Ascending aorta (tissue), 2 donors: ENCODE measurements at regions of chr17 and their contacts with region 1.

Region 1: GRCh38 chr17:59440784-59441441 is 109.5 kb downstream of the YPEL2 start:
- DNase-seq: peak; percentile 68 to 98
- H3K4me3 ChIP-seq: peak overlapping the region in 1 of 2 donors; percentile 22
- H3K27ac ChIP-seq: peak overlapping the region; percentile 91 to 93
- H3K4me1 ChIP-seq: peaks cover 8 to 35% of the 10 kb centered on the region in 2 donors
- H3K27me3 ChIP-seq: no peaks in the 10 kb centered on the region
- CTCF ChIP-seq: peak; percentile 71 to 93 (median 74)

Region 2: DNA sequence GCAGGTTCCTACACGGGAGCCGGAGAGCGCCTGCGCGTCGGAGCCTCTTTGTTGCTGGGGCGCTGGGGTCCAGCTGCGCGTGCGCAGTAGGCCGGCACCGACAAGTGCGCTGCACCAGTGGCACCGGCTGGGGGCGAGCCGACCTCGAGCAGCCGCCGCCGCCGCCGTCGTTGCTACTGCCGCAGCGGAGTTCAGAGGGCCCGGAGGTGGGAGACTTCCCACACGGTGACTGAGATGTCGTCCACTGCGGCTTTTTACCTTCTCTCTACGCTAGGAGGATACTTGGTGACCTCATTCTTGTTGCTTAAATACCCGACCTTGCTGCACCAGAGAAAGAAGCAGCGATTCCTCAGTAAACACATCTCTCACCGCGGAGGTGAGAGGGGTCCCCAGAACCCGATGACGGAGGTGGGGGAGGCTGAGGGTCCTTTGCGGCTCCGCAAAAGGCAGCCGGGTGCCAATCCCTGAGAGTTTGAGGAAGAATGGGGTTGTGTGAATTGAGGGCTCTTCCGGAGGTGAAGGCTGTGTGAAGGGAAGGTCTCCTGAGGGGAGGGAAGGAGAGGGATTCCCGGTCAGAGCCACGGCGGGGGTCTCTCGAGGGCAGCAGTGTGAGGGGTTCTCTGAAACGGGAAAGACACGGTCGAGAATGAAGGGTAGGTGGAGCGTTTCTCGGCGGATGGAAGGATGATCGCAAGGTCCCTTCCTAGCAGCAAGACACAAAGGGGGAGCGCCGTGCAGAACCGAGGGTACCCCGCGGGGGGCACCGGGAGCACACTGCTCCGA is 220.3 kb before region 1 on chr17 and contains the start of gene GDPD1:
- intact Hi-C with region 1: loop called (anchors 10 kb)
- DNase-seq: peak; percentile 63 to 97
- H3K4me3 ChIP-seq: peak within 1 kb of the TSS; percentile 78 to 84
- H3K27ac ChIP-seq: peak within 1 kb of the TSS; percentile 6 to 37
- H3K4me1 ChIP-seq: no peaks in the 10 kb centered on the region
- H3K27me3 ChIP-seq: no peaks in the 10 kb centered on the region
- CTCF ChIP-seq: peak; percentile 76 to 90 (median 82)
- total RNA-seq, gene GDPD1: not detected

Region 3: DNA sequence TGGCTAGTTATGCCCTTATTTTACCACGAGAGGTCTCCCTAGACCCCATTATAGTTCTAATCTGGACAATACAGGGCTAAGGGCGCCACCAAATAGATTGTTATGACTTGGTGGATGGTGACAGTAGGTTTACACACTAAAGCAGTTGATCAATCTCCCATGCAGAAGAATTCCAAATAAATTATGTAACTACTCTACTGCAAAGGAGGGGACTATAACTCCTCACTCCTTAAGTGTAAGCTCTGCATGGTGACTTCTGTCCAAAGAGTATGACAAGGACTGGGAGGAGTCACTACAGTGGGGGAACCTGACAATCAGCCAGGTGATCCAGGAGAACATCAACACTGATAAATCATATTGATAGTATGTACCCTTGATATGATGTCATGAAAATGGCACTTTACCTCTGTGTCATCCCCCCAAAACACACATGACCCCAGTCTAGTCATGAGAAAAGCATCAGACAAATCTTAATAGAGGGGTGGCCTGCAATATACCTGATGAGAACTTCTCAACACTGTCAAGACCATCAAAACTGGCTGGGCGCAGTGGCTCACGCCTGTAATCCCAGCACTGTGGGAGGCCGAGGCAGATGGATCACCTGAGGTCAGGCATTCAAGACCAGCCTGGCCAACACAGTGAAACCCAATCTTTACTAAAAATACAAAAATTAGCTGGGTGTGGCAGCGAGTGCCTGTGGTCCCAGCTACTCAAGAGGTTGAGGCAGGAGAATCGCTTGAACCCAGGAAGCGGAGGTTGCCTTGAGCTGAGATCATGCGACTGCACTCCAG is 129.6 kb before region 1 on chr17:
- intact Hi-C with region 1: loop called (anchors 1 kb)
- DNase-seq: peak in 1 of 2 donors; percentile 69
- H3K4me3 ChIP-seq: no peak overlapping the region
- H3K27ac ChIP-seq: peak overlapping the region; percentile 3 to 10
- H3K4me1 ChIP-seq: peaks cover 0 to 6% of the 10 kb centered on the region in 2 donors
- H3K27me3 ChIP-seq: no peaks in the 10 kb centered on the region
- CTCF ChIP-seq: peak; percentile 77 to 89 (median 80)

Region 4: GRCh38 chr17:59387351-59388068 is 53.4 kb before region 1 on chr17:
- intact Hi-C with region 1: loop called (anchors 2 kb)
- DNase-seq: no peak
- H3K4me3 ChIP-seq: no peak overlapping the region
- H3K27ac ChIP-seq: peak overlapping the region; percentile 66 to 74
- H3K4me1 ChIP-seq: peaks cover 5 to 40% of the 10 kb centered on the region in 2 donors
- H3K27me3 ChIP-seq: no peaks in the 10 kb centered on the region
- CTCF ChIP-seq: peak in 1 of 3 experiments; percentile 13

Region 5: DNA sequence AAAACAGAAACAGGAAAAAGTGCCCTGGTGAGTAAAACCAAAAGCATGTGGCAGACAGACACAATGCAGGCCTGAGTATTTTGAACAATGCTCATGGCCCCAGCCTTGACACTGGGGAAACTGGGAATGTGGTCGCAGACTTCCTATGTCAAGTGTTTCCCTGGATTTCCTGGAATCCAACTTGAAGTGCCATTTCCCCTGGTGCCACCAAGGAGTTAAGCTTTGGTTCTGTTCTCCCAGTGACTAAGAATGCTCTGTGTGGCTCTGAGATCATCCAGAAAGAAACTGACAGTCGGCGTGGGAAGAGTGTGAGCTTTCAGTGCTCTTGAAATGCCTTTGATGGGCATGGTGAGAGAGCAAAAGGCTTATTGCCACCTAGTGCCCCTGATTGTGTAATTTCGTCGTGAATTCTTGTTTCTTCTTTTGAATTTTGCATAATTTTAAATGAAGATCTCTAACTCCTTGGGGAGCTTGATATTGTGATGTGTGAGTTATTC is 13.4 kb before region 1 on chr17:
- intact Hi-C with region 1: loop called (anchors 2 kb)
- DNase-seq: peak in 1 of 2 donors; percentile 80
- H3K4me3 ChIP-seq: no peak overlapping the region
- H3K27ac ChIP-seq: peak overlapping the region; percentile 94
- H3K4me1 ChIP-seq: peaks cover 35 to 66% of the 10 kb centered on the region in 2 donors
- H3K27me3 ChIP-seq: no peaks in the 10 kb centered on the region
- CTCF ChIP-seq: no peak

Region 6: DNA sequence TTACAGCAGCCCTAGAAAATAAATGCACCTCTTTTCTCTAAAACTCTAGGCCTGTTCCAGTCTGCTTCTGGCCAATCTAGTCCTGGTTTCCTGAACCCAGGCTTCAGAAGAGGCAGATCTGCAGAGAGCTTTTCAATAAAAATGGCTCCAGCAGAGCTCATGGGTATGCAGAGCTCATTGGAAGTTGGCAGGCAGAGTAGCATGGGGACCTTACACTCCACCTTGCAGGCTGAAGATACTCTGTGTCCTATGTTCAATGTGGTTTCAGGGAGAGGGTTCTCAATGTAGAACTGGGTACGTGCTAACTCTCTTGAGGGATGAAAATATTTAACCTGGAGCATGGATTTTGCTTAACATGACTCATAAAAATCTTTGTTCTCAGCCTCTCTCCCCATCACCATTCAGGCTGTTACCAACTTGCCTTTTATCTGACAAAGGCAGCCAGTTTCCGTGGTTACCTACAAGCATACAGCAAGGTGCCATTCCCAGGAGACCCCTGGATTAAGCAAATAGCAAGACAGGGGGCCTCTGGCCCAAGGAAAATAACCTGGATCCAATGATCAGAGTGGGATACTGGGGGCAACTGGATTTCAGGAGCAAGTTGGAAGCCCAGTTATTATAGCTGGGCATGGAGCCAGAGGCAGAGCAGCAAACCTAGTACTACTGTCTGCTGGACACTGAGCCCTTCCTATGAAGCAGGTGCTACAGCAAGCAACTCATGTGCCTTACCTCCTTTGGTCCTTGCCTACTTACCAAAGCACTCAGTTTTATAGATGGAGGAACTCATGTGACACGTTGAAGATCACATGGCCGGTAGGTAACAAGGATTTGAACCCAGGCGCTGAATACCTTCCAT is 26.3 kb after region 1 on chr17:
- intact Hi-C with region 1: no loop called
- DNase-seq: no peak
- H3K4me3 ChIP-seq: no peak overlapping the region
- H3K27ac ChIP-seq: no peak overlapping the region
- H3K4me1 ChIP-seq: no peaks in the 10 kb centered on the region
- H3K27me3 ChIP-seq: no peaks in the 10 kb centered on the region
- CTCF ChIP-seq: no peak

Region 7: DNA sequence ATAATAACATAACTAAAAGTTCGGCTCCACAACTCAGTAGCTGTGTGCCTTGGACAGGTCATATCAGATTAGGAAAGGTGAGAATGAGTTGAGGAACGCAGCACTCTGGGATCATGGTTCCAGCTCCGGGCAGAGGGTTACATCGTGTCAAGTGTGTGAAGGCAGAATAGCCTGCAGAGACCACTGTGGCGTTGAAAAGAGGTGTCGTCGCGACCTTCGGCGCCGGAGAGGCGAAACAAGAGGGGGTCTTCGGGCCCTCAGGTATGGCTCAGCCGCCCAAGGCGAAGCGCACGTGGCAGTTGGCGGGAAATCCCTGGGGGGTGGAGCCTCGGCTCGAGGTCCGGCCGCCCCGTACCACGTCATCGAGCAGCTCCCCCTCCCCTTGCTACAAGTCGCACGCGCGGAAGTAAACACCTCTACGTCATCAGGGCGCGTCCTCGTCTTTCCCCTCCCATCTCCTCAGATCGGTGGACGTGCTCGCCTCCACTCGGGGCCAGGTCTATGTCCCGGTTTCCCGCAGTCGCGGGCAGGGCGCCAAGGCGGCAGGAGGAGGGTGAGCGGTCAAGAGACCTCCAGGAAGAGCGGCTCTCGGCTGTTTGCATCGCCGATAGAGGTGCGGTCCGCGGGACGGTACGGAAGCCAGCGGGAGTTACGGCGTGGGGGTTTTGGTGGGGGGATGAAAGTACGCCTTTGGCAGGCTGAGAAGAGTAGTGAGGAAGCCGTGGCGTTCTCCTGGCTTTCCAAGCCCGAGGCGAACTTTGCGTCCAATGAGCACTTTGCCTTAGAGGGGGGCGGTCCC is 124.5 kb after region 1 on chr17 and contains the start of gene DHX40:
- intact Hi-C with region 1: loop called (anchors 5 kb)
- DNase-seq: peak; percentile 78 to 98
- H3K4me3 ChIP-seq: peak within 1 kb of the TSS; percentile 57 to 100
- H3K27ac ChIP-seq: peak within 1 kb of the TSS; percentile 81 to 97
- H3K4me1 ChIP-seq: peaks cover 0 to 8% of the 10 kb centered on the region in 2 donors
- H3K27me3 ChIP-seq: no peaks in the 10 kb centered on the region
- CTCF ChIP-seq: no peak
- total RNA-seq, gene DHX40: 4.8 TPM